ENCODE measurements at regions of chr22 and their contacts with region 1.

Region 1: GRCh38 chr22:38953577-38954413 is 3.6 kb upstream of the APOBEC3A start:
- DNase-seq: peak; percentile 32
- H3K27ac ChIP-seq: no peak overlapping the region
- CTCF ChIP-seq: no peak

Region 2: DNA sequence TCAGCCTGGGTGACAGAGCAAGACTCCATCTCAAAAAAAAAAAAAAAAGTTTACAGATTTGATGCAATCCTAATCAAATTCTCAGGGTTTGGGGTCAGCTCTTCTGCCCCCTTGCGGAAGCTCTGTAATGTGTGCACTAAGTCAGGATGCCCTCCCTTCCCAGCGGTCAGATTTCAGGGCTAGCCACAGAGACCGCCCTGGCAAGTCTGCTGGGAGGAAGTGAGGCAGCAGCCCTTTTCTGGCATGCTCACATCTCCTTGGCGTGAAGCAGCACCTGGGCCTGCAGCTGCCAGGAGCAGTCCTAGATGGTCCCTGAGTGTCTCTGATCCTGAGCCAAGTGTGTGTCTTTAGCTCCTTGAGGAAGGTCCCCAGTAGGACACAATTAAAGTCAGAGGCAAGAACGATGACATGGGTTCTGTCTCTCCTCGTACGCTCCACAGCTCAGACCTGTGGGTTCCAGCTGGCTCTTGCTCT is 49.4 kb after region 1 on chr22:
- CTCF ChIA-PET with region 1: interaction called, 12 read pairs
- POLR2A ChIA-PET with region 1: no interaction called
- DNase-seq: peak; percentile 73
- H3K27ac ChIP-seq: peak overlapping the region; percentile 51
- CTCF ChIP-seq: peak; percentile 82